CD8-positive, alpha-beta memory T cell (primary cell): ENCODE measurements at regions of chr16 and their contacts with region 1.

Region 1: DNA sequence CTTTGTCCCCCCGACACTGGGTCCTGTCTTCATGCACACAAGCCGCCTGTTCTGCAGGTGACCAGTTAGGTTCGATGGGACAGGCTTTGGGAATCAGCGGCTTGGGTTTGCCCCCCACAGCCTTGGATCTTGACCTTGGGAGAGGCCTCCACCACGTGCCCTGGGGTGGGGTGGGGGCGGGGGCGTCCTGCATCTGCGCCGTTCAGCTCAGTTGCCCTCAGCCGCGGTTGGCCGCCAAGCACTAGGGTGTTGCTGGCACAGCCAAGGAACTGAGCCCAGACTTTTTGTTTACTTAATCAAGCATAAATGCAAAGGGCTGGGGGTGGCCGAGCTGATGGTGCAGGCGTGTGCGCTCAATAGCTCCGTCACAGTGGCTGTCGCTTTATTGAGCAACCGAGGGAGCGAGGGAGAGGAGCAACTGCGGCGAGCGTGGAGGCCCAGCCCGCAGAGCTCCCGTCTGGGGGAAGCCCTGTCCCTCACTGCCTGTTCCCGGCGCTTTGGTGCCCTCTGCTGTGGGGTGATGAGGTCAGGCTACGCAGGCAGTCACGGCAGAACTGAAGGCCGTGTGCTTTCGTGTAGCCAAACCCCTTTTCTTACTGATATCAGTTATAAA is 33.9 kb downstream of the JPH3 start:
- DNase-seq: peak; percentile 70 to 86 (median 74)
- H3K4me3 ChIP-seq: peak overlapping the region; percentile 61
- H3K4me3 Mint-ChIP-seq: peak overlapping the region; percentile 69 to 92 (median 88)
- H3K27ac ChIP-seq: no peak overlapping the region
- H3K27ac Mint-ChIP-seq: peak overlapping the region; percentile 61 to 98 (median 85)
- H3K4me1 ChIP-seq: peaks cover 18% of the 10 kb centered on the region
- H3K4me1 Mint-ChIP-seq: peaks cover 9 to 19% (median 15%) of the 10 kb centered on the region in 3 donors
- H3K27me3 ChIP-seq: no peaks in the 10 kb centered on the region
- H3K27me3 Mint-ChIP-seq: peaks cover 8 to 11% of the 10 kb centered on the region in 2 donors

Region 2: DNA sequence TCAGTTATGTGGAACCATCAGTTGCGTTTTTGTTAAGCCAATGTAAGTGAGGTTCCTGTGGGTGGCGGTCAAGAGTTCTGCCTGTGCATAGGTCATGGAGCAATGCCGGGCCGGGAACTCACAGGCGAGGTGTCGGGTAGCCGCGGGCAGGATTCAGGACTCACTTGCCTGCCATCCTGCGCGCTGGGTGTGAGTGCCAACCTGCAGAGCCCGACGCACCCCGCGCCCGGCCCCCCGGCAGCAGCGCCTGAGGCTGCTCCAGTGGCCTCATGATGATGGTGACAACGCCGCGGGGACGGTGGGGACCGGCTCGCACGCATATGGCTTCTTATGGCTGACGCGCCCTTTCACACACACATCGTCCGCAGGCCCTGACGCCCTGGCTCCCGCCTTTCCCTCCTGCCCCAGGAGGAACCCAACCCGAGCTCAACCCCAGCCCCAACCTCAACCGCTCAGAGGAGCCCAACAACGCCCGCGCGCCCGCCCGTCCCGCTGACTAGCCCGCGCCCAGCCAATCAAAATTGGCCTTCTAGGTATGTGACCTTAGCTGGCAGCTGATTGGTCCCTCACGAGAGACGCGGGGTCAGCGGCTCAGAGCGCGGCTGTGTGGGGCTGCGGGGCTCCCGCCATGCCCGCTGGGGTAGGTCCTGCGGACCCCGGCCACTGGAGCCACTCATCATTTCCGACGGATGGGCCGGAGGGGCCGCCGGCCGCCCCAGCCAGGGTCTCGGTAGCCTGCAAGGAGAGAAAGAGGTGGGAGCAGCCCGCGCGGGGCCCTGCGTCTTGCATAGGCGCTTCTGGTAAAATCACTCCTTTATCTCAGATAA is 319.0 kb before region 1 on chr16 and contains the start of gene C16orf95:
- CTCF ChIA-PET with region 1: interaction called, 21 read pairs
- POLR2A ChIA-PET with region 1: no interaction called
- DNase-seq: peak; percentile 93 to 97 (median 96)
- H3K4me3 ChIP-seq: peak within 1 kb of the TSS; percentile 90
- H3K4me3 Mint-ChIP-seq: peak within 1 kb of the TSS; percentile 89 to 99 (median 94)
- H3K27ac ChIP-seq: peak within 1 kb of the TSS; percentile 91
- H3K27ac Mint-ChIP-seq: peak within 1 kb of the TSS; percentile 88 to 99 (median 95)
- H3K4me1 ChIP-seq: peaks cover 9% of the 10 kb centered on the region
- H3K4me1 Mint-ChIP-seq: peaks cover 13 to 21% (median 15%) of the 10 kb centered on the region in 3 donors
- H3K27me3 ChIP-seq: no peaks in the 10 kb centered on the region
- H3K27me3 Mint-ChIP-seq: no peaks in the 10 kb centered on the region
- total RNA-seq, gene C16orf95: 7.5 to 8.4 TPM

Region 3: DNA sequence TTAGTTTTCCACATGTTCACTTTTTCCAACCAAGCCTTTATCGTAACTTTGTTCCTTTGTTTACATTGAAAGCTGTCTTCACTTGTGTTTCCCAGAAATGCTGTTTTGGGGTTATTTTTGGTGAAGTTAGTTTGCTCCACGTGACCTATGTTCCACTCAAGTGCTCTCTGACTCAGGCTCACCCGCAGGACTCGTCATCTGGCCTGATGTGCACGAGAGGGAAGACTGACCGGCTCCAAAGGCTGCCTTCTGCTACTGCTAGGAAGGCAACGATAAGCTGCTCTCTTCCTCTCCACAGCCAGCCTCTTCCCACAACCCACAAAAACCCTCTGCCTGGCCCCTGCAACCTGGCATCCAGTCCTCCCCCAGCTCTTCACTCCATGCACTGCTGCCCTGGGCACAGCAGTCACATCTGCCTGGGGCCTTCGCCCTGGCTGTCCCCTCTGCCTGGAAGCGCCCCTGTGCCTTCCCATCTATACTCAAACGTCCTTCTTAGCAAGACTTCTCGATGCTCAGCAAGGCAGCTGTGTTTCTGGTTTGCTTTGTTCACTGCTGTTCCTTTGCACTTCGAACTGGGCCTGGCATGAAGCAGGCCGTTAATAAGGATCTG is 171.4 kb before region 1 on chr16:
- CTCF ChIA-PET with region 1: interaction called, 11 read pairs
- POLR2A ChIA-PET with region 1: no interaction called
- DNase-seq: no peak
- H3K4me3 ChIP-seq: peak overlapping the region; percentile 9
- H3K4me3 Mint-ChIP-seq: peak overlapping the region; percentile 21 to 68 (median 58)
- H3K27ac ChIP-seq: peak overlapping the region; percentile 48
- H3K27ac Mint-ChIP-seq: peak overlapping the region; percentile 67 to 93 (median 83)
- H3K4me1 ChIP-seq: peaks cover 31% of the 10 kb centered on the region
- H3K4me1 Mint-ChIP-seq: peaks cover 29 to 44% (median 38%) of the 10 kb centered on the region in 3 donors
- H3K27me3 ChIP-seq: no peaks in the 10 kb centered on the region
- H3K27me3 Mint-ChIP-seq: no peaks in the 10 kb centered on the region

Region 4: GRCh38 chr16:87587636-87588035 is 48.5 kb before region 1 on chr16:
- CTCF ChIA-PET with region 1: interaction called, 15 read pairs
- POLR2A ChIA-PET with region 1: no interaction called
- DNase-seq: no peak
- H3K4me3 ChIP-seq: no peak overlapping the region
- H3K4me3 Mint-ChIP-seq: no peak overlapping the region
- H3K27ac ChIP-seq: no peak overlapping the region
- H3K27ac Mint-ChIP-seq: no peak overlapping the region
- H3K4me1 ChIP-seq: no peaks in the 10 kb centered on the region
- H3K4me1 Mint-ChIP-seq: no peaks in the 10 kb centered on the region
- H3K27me3 ChIP-seq: peaks cover 2% of the 10 kb centered on the region
- H3K27me3 Mint-ChIP-seq: peaks cover 14 to 53% of the 10 kb centered on the region in 2 donors